BJ (cell line): ENCODE measurements at regions of chr6 and their contacts with region 1.

Region 1: DNA sequence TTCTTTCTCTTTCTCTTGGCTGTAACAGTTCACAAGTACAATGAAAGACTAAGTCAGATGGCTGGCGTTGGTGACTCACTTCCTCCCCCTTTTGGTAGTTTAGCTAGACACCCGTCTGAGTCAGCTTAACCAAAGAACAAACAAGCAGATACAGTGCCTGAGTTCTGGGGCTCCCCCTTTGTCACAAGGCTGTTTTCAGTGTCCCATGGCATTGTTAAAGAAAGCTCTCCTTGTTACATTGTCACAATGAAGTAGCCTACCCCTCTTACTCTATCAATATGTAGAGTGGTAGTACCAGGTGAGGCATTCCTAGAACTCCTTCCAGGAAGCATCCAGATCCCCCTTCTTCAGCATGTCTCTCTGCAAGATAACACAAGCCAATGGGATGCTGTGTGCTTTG is 38.6 kb downstream of the KIAA0408 start:
- DNase-seq: peak; percentile 73
- H3K4me3 ChIP-seq: no peak overlapping the region
- H3K27me3 ChIP-seq: no peaks in the 10 kb centered on the region
- CTCF ChIP-seq: peak; percentile 56

Region 2: GRCh38 chr6:127302728-127303660 is 117.6 kb before region 1 on chr6:
- CTCF ChIA-PET with region 1: interaction called, 51 read pairs
- POLR2A ChIA-PET with region 1: no interaction called
- DNase-seq: no peak
- H3K4me3 ChIP-seq: no peak overlapping the region
- H3K27me3 ChIP-seq: no peaks in the 10 kb centered on the region
- CTCF ChIP-seq: peak; percentile 62

Region 3: DNA sequence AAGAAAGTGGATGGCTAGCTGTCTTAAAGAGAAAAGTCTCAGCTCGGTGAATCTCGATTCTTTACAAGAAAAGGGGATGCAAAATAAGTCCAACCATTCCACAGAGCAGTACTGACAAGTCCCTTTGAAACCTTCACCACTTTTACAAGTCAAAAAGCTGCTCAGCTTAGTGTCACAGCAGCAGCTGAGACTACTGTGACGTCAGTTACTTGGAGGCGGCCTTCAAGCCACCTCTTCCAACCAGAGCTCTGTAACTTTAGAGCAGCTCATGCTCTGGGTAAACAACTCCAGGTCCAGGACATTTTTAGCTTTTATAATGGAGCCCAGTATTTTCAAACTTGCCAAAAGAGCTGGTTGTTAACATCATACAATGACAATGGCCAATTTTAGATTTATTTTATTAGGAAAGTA is 38.7 kb after region 1 on chr6 and contains the start of gene KIAA0408:
- CTCF ChIA-PET with region 1: no interaction called
- POLR2A ChIA-PET with region 1: no interaction called
- DNase-seq: peak; percentile 39
- H3K4me3 ChIP-seq: peak within 1 kb of the TSS; percentile 24; the same call in 1 of the 2 replicates
- H3K27me3 ChIP-seq: no peaks in the 10 kb centered on the region
- CTCF ChIP-seq: no peak
- polyA plus RNA-seq, gene KIAA0408: 0.86 and 1.6 TPM in 2 replicates

Region 4: DNA sequence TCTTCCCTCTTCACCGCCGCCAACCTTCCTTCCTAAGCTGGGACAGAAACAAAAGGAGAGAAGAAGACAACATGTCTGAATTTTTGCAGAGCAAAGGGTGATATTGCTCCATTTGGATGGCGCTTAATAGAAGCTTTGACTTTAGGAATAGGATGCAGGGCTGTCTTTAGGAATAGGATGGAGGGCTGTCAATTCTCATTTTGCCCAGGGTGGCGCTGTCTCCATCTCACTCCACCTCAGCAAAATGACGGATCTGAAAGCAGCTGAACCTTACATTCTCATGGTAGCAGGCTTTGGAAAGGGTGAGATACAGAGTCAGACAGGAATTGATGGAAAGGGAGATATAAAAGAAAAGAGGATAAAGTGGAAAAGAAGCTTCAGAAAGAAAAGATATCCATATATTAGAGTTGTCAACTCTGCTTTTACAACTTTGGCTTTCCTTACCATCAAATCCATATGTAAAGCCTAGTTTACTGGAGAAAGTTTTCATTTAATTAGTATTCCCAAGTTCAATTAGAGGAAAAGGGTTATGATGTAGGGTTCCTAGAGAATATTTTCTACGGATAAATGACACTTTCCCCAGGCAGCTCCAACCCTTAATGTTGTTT is 96.2 kb after region 1 on chr6:
- CTCF ChIA-PET with region 1: no interaction called
- POLR2A ChIA-PET with region 1: no interaction called
- DNase-seq: no peak
- H3K4me3 ChIP-seq: peak overlapping the region; percentile 72
- H3K27me3 ChIP-seq: 0 out of 2 replicates have a peak, but pooled peaks cover 3% of the 10 kb centered on the region
- CTCF ChIP-seq: peak; percentile 66

Region 5: DNA sequence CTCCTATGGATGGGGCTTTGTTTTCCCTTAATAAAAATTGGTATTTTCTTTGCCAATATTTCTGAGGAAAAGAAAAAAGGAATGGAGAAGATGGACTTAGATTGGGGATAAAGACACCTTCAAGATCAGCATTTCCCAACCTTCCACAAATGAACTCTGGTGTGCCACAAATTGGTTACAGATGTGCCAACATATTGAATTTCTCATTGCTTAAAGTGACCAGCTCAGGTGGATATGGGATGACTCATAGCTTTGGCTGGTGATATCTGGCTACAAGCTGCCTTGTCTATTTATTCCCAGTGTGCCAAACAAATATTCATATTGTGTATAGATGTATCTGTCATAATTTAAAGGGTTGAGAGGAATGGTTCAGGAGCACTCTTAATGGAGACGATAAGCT is 447.8 kb after region 1 on chr6:
- CTCF ChIA-PET with region 1: no interaction called
- POLR2A ChIA-PET with region 1: no interaction called
- DNase-seq: no peak
- H3K4me3 ChIP-seq: no peak overlapping the region
- H3K27me3 ChIP-seq: no peaks in the 10 kb centered on the region
- CTCF ChIP-seq: no peak